Ascending aorta (tissue), 2 donors: ENCODE measurements at regions of chr12 and their contacts with region 1.

Region 1: DNA sequence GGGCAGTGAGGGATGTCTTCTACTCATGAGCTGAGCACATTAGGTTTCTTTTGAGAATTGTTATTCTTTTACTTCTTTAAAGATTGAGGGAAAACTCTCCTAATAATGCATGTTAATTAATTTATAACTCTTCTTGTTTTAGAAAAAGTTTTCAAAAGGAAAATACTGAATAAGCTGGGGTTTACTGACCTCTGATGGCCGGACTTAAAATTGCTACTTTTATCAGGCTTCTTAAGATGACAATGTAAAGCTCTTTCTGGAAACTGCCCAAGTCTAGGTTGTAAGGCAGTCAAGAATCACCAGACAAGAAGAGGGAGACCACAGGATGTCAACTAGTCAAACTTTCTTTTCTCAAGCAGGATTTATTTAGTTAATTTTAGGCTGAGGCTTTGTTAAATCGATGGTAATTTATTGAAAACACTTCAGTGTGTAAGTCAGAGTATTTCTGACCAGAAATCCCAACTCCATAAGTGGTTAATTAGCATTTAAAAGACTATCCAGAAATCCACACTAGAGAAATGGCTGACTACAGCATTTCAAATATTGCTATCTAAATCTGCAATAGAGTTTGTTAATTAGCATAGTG is 82.1 kb downstream of the AVPR1A start:
- DNase-seq: no peak
- H3K4me3 ChIP-seq: no peak overlapping the region
- H3K27ac ChIP-seq: no peak overlapping the region
- H3K4me1 ChIP-seq: no peaks in the 10 kb centered on the region
- H3K27me3 ChIP-seq: no peaks in the 10 kb centered on the region
- CTCF ChIP-seq: peak; percentile 5 to 65 (median 57)

Region 2: GRCh38 chr12:62435303-62436163 is 633.4 kb before region 1 on chr12:
- intact Hi-C with region 1: loop called (anchors 5 kb)
- DNase-seq: peak in 1 of 2 donors; percentile 67
- H3K4me3 ChIP-seq: peak overlapping the region; percentile 52 to 75
- H3K27ac ChIP-seq: no peak overlapping the region
- H3K4me1 ChIP-seq: peaks cover 0 to 2% of the 10 kb centered on the region in 2 donors
- H3K27me3 ChIP-seq: no peaks in the 10 kb centered on the region
- CTCF ChIP-seq: peak; percentile 29 to 68 (median 42)